Mammary epithelial cell (primary cell): ENCODE measurements at regions of chr12 and their contacts with region 1.

Region 1: DNA sequence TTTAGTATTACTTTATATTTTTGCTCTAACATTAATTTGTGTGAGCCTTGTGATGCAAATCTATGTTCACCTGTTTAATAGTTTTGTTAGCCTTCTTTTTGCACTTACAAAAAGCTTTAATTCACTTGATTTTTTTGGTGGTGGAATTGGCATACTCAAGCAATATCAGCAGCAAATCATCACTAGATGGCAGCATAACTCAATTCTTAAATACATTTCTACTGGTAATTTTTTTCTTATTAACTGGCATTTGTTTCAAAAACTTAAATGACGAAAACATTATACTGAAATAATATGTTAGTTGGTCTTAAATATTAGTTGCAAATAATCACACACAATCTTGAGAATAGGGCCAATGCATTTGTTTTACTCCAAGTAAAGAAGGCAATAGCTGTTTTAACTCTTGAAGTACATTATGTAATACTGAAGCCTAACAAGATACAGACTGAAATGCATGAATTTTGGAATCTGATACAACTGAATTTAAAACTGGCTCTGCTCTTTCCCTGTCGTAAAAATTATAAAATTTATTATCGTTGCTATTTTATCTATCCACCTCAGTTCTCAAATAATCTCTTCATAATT is 151.5 kb downstream of the ATXN7L3B start:
- DNase-seq: peak; percentile 14
- H3K4me3 ChIP-seq: no peak overlapping the region
- H3K27ac ChIP-seq: no peak overlapping the region
- H3K4me1 ChIP-seq: no peaks in the 10 kb centered on the region
- H3K27me3 ChIP-seq: peaks cover 1% of the 10 kb centered on the region
- CTCF ChIP-seq: peak; percentile 61 to 62

Region 2: GRCh38 chr12:75270157-75270556 is 581.0 kb after region 1 on chr12:
- CTCF ChIA-PET with region 1: no interaction called
- dilution Hi-C with region 1: no loop called
- in situ Hi-C with region 1: loop called (anchors 10 to 25 kb)
- intact Hi-C with region 1: no loop called
- DNase-seq: no peak
- H3K4me3 ChIP-seq: no peak overlapping the region
- H3K27ac ChIP-seq: no peak overlapping the region
- H3K4me1 ChIP-seq: no peaks in the 10 kb centered on the region
- H3K27me3 ChIP-seq: no peaks in the 10 kb centered on the region
- CTCF ChIP-seq: no peak

Region 3: DNA sequence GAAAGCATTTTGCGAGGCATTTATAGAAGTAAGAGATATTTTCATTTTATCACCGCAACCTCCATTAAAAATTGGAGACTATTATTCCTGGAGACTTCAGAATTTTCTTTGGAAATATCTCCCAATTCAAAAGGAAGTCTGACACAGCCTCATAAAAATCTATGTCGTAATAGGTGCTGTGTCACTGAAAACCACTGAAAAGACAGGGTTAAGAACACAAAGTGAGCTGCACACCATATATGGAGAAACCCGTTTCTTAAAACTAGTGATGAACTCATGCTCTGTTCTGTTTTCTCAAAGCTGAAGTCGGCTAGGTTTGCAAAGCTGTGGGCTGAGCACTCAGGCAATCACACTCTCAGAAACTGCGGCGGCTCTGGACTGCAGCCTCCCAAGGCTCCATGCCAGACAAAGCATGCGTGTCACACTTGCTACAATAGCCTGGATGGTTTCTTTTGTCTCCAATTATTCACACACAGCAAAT is 791.3 kb after region 1 on chr12 and contains the start of gene GLIPR1:
- CTCF ChIA-PET with region 1: no interaction called
- dilution Hi-C with region 1: no loop called
- in situ Hi-C with region 1: no loop called
- intact Hi-C with region 1: loop called (anchors 10 kb)
- DNase-seq: peak; percentile 95
- H3K4me3 ChIP-seq: peak within 1 kb of the TSS; percentile 49 to 71 (median 67)
- H3K27ac ChIP-seq: peak within 1 kb of the TSS; percentile 85
- H3K4me1 ChIP-seq: peaks cover 41% of the 10 kb centered on the region
- H3K27me3 ChIP-seq: no peaks in the 10 kb centered on the region
- CTCF ChIP-seq: no peak
- total RNA-seq, gene GLIPR1: 92.4 to 96.0 TPM

Region 4: GRCh38 chr12:75505706-75506312 is 816.6 kb after region 1 on chr12:
- CTCF ChIA-PET with region 1: no interaction called
- dilution Hi-C with region 1: no loop called
- in situ Hi-C with region 1: no loop called
- intact Hi-C with region 1: loop called (anchors 5 kb)
- DNase-seq: no peak
- H3K4me3 ChIP-seq: no peak overlapping the region
- H3K27ac ChIP-seq: no peak overlapping the region
- H3K4me1 ChIP-seq: peaks cover 13% of the 10 kb centered on the region
- H3K27me3 ChIP-seq: no peaks in the 10 kb centered on the region
- CTCF ChIP-seq: peak; percentile 56 to 88